GM23248 (cell line): ENCODE measurements at regions of chr13 and their contacts with region 1.

Region 1: DNA sequence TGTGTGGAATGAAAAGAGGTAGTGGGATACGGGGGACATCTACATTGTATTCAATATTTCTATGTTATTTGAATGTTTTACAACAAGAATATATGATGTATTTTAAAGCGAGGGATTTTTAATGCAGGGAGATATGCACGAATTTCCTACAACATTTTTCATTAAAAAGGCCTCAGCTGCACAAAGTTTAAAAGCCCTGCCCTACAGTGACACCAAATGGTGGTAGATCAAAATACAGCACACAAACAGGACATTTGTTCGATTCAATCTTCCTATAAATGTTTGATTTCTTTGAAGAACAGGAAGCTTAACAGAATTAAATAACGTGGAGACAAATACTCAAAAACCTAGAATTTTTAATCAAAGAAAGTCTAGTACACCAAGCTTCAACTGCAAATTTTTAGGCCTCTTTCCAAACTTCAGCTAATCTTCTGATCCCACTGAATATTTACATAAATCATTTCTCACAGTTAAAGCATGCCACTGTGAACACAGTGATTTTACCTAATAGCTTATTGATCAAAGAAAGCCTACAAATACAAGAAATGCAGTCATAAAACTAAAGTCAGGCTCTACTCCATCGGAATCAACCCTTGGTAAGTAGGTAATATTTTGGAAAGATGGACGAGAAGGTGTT is 257.2 kb downstream of the DIAPH3 start:
- DNase-seq: peak; percentile 67
- H3K4me3 ChIP-seq: no peak overlapping the region
- H3K27ac ChIP-seq: no peak overlapping the region
- H3K4me1 ChIP-seq: peaks cover 6% of the 10 kb centered on the region; the same call in 1 of the 2 replicates
- H3K27me3 ChIP-seq: no peaks in the 10 kb centered on the region

Region 2: GRCh38 chr13:59391696-59392095 is 514.8 kb before region 1 on chr13:
- in situ Hi-C with region 1: loop called (anchors 25 kb)
- DNase-seq: peak; percentile 79
- H3K4me3 ChIP-seq: no peak overlapping the region
- H3K27ac ChIP-seq: no peak overlapping the region
- H3K4me1 ChIP-seq: no peaks in the 10 kb centered on the region
- H3K27me3 ChIP-seq: peaks cover 3% of the 10 kb centered on the region; the same call in 1 of the 2 replicates

Region 3: DNA sequence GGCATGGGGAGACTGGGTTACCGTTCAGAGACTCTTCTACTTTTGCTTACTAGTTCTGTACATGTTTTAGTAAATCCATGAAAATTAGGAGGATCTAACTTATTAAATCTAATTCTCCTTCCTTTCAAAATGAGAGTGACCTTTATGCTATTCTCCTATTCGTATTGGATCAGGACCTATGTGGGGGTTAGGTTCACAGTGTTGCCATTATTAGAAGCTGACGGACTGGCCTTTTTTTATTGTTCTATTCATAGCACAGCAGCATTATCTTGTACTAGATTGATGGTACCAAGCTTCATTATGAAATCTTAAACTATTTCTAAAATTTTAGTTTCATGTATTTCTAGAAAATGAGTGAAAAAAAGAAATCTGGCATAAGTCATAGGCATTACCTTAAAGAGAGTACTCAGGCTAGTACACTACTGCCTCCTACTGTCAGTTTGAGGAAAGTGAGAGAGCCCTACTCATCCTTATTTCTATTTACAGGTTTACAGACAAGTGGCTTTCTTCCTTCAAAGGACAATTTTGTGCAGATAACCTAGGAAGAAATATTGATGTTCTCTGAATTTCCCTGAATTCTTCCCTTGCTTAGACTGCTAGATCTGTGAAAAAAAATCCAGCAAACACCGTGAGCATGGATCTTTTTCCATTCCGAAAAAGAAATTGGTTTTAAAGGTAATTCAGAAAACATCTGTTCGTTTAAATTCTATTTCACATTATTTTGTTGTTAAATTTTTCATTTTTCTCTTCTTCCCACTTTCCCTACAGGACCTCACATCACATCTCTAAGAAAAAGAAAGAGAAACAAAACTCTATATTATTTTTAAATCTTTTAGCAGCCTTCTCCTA is 228.3 kb before region 1 on chr13:
- in situ Hi-C with region 1: loop called (anchors 10 kb)
- DNase-seq: peak; percentile 53
- H3K4me3 ChIP-seq: no peak overlapping the region
- H3K27ac ChIP-seq: no peak overlapping the region
- H3K4me1 ChIP-seq: no peaks in the 10 kb centered on the region
- H3K27me3 ChIP-seq: no peaks in the 10 kb centered on the region

Region 4: GRCh38 chr13:60075850-60076249 is 169.3 kb after region 1 on chr13:
- in situ Hi-C with region 1: no loop called
- DNase-seq: no peak
- H3K4me3 ChIP-seq: no peak overlapping the region
- H3K27ac ChIP-seq: no peak overlapping the region
- H3K4me1 ChIP-seq: peaks cover 4% of the 10 kb centered on the region
- H3K27me3 ChIP-seq: no peaks in the 10 kb centered on the region